Esophagus muscularis mucosa (tissue), 4 donors: ENCODE measurements at regions of chr19 and their contacts with region 1.

Region 1: GRCh38 chr19:768424-768823 is 17.5 kb downstream of the MISP start:
- DNase-seq: no peak
- H3K4me3 ChIP-seq: no peak overlapping the region
- H3K27ac ChIP-seq: no peak overlapping the region
- H3K4me1 ChIP-seq: peaks cover 5 to 8% (median 6%) of the 10 kb centered on the region in 4 donors
- H3K27me3 ChIP-seq: peaks cover 0 to 50% (median 1%) of the 10 kb centered on the region in 4 donors
- CTCF ChIP-seq: no peak
- EP300 ChIP-seq: no peak
- POLR2A ChIP-seq: no peak

Region 2: DNA sequence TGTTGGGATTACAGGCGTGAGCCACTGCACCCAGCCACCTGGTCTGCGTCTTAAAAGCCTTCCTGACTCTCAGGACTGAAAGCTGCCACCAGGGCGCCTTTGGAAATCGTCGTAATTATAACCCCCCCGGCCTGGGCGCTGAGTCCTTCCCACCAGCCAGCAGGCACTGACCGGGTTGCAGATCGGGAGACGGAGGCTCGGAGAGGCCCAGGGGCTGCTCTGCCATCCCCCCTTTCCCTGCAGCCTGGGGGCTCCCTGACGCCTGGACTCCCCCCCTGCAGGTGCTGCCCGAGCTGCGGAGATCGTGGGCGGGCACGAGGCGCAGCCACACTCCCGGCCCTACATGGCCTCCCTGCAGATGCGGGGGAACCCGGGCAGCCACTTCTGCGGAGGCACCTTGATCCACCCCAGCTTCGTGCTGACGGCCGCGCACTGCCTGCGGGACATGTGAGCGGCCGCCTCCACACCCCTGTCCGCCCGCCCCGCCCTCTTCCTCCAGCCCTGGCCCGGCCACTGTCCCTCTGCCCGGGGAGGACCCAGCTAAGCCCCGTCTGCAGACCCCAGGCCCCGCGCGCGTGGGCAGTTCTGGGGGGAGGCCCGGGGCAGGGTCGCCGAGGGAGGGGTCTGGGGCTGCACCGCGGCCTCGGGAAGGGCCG is 74.9 kb after region 1 on chr19:
- intact Hi-C with region 1: no loop called
- DNase-seq: no peak
- H3K4me3 ChIP-seq: peak overlapping the region; percentile 31 to 42 (median 34)
- H3K27ac ChIP-seq: no peak overlapping the region
- H3K4me1 ChIP-seq: peaks cover 13 to 30% (median 23%) of the 10 kb centered on the region in 4 donors
- H3K27me3 ChIP-seq: peaks cover 0 to 96% (median 35%) of the 10 kb centered on the region in 4 donors
- CTCF ChIP-seq: peak in 1 of 3 experiments; percentile 3
- EP300 ChIP-seq: no peak
- POLR2A ChIP-seq: no peak

Region 3: DNA sequence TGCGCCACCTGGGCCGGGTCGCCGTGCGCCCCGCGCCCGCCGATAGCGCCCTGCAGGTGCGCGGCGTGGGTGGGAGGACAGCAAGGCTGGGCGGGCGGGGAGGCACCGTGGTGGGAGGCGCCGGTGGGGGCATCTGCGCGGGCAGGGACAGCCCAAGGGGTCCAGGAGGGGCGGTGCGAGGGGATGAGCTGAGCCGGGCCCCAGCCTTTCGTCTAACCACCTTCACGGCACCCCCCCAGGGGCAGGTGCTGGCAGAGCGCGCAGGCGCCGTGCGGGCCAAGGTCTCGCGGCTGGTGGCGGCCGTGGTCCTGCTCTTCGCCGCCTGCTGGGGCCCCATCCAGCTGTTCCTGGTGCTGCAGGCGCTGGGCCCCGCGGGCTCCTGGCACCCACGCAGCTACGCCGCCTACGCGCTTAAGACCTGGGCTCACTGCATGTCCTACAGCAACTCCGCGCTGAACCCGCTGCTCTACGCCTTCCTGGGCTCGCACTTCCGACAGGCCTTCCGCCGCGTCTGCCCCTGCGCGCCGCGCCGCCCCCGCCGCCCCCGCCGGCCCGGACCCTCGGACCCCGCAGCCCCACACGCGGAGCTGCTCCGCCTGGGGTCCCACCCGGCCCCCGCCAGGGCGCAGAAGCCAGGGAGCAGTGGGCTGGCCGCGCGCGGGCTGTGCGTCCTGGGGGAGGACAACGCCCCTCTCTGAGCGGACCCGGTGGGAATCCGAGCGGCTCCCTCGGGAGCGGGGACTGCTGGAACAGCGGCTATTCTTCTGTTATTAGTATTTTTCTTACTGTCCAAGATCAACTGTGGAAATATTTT is 151.8 kb after region 1 on chr19:
- intact Hi-C with region 1: loop called (anchors 2 kb)
- DNase-seq: no peak
- H3K4me3 ChIP-seq: peak overlapping the region; percentile 24 to 45 (median 29)
- H3K27ac ChIP-seq: no peak overlapping the region
- H3K4me1 ChIP-seq: peaks cover 36 to 69% (median 62%) of the 10 kb centered on the region in 4 donors
- H3K27me3 ChIP-seq: peaks cover 3 to 54% (median 48%) of the 10 kb centered on the region in 4 donors
- CTCF ChIP-seq: no peak
- EP300 ChIP-seq: no peak
- POLR2A ChIP-seq: no peak

Region 4: GRCh38 chr19:984165-984967 is 215.9 kb after region 1 on chr19 and contains the start of gene WDR18:
- intact Hi-C with region 1: loop called (anchors 5 kb)
- DNase-seq: peak; percentile 97
- H3K4me3 ChIP-seq: peak within 1 kb of the TSS; percentile 82 to 98 (median 92)
- H3K27ac ChIP-seq: peak within 1 kb of the TSS; percentile 84 to 88 (median 87)
- H3K4me1 ChIP-seq: peaks cover 24 to 43% (median 32%) of the 10 kb centered on the region in 4 donors
- H3K27me3 ChIP-seq: peaks cover 0 to 9% (median 0%) of the 10 kb centered on the region in 4 donors
- CTCF ChIP-seq: peak in 2 of 3 experiments; percentile 43 to 46
- EP300 ChIP-seq: no peak
- POLR2A ChIP-seq: peak; percentile 35
- total RNA-seq, gene WDR18: 9.9 to 30.3 (median 28.4) TPM